B cell (primary cell): ENCODE measurements at regions of chrX and their contacts with region 1.

Region 1: DNA sequence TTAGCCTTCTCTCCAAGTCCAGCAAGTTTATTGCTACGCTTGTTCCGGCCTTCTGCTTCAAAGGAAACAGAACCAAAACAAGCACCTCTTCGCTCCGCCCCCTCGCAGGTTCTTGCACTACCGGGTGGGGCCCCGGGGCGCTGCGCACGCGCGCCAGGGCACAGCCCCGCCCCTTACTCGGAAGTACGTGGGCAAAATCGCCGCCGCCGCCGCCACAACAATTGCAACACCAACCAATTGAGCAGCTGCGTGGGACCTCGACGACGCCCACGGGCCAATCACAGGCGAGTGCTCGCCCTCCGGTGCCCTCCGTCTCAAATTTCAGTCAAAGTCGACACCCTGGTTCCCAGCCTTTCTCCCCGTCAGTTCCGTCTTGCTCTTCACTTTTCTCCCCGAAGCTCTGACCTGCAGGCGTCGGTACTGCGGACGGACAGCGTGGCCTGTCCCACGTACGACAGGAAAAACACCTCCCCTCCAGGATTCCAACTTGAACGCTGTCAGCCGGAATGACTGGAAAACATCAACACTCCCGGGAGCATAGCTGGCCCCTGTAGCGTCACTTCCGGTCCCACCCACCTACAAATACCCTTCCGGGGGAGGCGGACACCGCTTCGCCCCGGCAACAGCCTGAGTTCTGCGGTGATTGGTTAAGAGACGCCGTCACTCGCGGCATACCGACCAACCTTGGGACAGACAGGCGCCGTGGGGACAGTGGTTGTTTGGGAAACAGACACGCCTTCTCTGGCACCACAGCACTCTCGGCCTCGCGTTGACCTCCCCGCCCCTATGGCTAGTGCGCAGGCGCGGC is 624 bp upstream of the OTUD5 start:
- DNase-seq: peak; percentile 96
- ATAC-seq: peak; percentile 81
- H3K4me3 ChIP-seq: peak overlapping the region; percentile 8 to 75 (median 65)
- H3K4me3 Mint-ChIP-seq: peak overlapping the region; percentile 100
- H3K27ac ChIP-seq: peak overlapping the region; percentile 98 to 99
- H3K27ac Mint-ChIP-seq: peak overlapping the region; percentile 100
- H3K4me1 ChIP-seq: peaks cover 50 to 78% of the 10 kb centered on the region in 2 donors
- H3K4me1 Mint-ChIP-seq: peaks cover 61% of the 10 kb centered on the region
- H3K27me3 ChIP-seq: no peaks in the 10 kb centered on the region
- H3K27me3 Mint-ChIP-seq: no peaks in the 10 kb centered on the region
- CTCF ChIP-seq: no peak

Region 2: DNA sequence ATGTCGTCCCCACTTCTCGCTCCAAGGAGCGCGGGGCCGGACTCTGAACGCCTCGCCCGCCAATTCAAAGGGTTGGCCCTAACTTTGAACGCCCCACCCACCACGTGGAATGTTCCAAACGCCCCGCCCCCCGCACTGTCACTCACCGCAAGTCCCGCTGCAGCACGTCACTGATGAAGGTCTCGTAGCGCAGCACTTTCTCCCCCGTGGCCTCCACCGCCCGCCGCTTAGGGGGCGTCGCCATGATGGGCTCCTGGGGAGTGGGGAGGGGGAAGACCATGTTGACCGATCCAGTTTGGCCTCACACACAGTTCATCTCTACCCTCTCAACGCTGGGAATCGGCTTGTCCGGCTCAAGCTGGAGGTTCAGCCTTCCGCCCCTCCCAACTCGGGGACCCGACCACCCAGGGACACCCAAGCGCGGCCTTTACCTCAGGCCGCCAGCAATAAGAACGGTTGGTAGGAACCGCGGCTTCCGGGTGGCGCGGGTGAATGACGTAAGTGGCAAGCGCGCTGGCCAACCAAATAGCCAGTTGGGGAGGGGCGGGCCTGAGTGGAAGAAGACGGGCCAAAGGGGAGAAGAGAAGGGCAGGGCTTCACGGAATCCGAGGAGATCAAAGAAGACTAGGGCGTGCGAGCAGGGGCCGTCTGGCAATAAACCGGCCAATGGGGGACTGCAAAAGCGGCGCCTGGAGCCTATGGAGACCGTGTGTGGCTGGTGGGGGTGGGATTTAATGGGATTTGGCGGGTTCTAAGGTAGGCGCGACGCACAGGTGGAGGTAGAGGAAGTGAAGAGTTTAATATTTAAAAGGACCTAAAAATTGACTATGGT is 1299.1 kb before region 1 on chrX and contains the start of gene UXT:
- CTCF ChIA-PET with region 1: no interaction called
- POLR2A ChIA-PET with region 1: no interaction called
- intact Hi-C with region 1: loop called (anchors 5 kb)
- DNase-seq: peak; percentile 94
- ATAC-seq: peak; percentile 82
- H3K4me3 ChIP-seq: peak within 1 kb of the TSS; percentile 53 to 80 (median 71)
- H3K4me3 Mint-ChIP-seq: peak within 1 kb of the TSS; percentile 95
- H3K27ac ChIP-seq: peak within 1 kb of the TSS; percentile 98
- H3K27ac Mint-ChIP-seq: peak within 1 kb of the TSS; percentile 100
- H3K4me1 ChIP-seq: peaks cover 10 to 16% of the 10 kb centered on the region in 2 donors
- H3K4me1 Mint-ChIP-seq: peaks cover 16% of the 10 kb centered on the region
- H3K27me3 ChIP-seq: no peaks in the 10 kb centered on the region
- H3K27me3 Mint-ChIP-seq: no peaks in the 10 kb centered on the region
- CTCF ChIP-seq: no peak
- total RNA-seq, gene UXT: 177 and 183 TPM in 2 replicates

Region 3: DNA sequence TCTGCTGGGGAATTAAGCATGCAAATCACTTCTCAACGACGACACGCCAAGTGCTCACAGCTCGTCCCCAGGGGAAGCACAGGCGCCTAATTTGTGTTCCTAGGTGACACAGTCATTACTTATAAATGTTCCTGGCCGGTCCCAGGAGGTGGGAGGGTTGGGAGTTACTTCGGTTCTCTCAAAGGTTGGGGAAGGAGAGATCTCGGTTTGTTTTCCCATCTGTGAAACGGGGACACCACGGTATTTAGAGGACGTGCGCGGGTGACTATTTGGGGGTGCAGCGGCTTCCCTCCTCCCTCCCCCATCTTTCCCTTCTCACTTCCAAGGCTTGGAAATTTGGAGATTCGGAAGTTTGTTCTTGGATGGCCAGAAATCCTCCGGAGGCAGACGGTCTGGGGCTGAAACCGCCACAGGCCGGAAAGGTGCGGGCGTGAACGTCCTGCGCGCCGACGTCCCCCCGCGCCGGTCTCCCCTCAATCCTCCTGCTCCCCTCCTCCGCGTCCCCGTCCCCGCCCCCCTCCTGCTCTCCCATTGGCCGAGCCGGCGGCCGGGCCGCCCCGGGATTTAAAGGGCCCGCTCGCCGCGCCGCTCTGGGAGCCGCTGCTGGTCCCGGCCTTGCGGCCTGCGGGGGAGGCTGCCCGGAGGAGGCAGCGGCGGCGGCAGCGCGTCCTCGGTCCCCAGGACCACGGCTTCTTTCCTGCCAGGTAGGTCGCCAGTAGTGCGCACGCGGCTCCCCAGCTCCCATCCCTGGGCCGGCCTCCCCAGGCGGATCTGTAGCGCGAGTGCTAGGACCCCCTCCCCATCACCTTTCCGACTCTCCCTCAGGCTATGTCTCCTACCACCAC is 449.4 kb before region 1 on chrX and contains the start of gene PORCN:
- CTCF ChIA-PET with region 1: no interaction called
- POLR2A ChIA-PET with region 1: no interaction called
- intact Hi-C with region 1: no loop called
- DNase-seq: peak; percentile 82
- ATAC-seq: peak; percentile 92
- H3K4me3 ChIP-seq: peak within 1 kb of the TSS; percentile 58 to 82 (median 74)
- H3K4me3 Mint-ChIP-seq: peak within 1 kb of the TSS; percentile 92
- H3K27ac ChIP-seq: peak within 1 kb of the TSS; percentile 89 to 92
- H3K27ac Mint-ChIP-seq: peak within 1 kb of the TSS; percentile 96
- H3K4me1 ChIP-seq: peaks cover 3 to 13% of the 10 kb centered on the region in 2 donors
- H3K4me1 Mint-ChIP-seq: peaks cover 12% of the 10 kb centered on the region
- H3K27me3 ChIP-seq: no peaks in the 10 kb centered on the region
- H3K27me3 Mint-ChIP-seq: no peaks in the 10 kb centered on the region
- CTCF ChIP-seq: no peak
- total RNA-seq, gene PORCN: 12.8 and 13.0 TPM in 2 replicates

Region 4: DNA sequence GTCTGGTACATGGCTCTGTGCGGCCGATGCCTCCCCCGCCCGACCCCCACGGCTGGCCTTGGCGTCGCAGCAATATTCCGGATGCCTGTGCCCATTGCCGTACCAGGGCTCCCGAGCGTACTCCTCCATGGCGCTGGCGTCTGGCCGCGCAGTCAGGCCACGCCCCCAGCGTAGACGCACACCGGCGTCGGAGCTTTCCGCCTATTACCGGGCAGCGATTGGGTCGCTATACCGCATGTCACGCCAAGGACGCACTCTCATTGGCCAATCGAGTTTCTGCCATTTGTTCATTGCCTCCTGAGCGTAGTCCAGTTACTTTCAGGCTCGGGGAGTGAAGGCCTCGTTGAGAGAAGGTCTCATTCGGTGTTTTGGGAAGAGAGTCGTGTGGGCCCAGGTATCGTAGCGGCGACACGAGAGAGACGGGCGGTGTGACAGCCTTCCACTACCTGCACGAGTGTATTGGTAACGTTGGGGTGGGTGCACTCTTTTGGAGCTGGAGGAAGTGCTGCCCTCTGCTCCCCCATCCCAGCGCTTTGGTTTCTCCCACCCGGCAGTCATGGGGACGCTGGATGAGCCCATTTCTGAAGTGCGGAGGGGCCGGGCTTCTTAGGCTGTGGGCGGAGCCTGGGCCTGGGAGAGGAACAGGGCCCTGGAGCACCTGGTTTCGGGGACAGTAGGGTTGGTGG is 60.3 kb before region 1 on chrX and contains the starts of genes PQBP1 and TIMM17B:
- CTCF ChIA-PET with region 1: no interaction called
- POLR2A ChIA-PET with region 1: interaction called, 8 read pairs
- intact Hi-C with region 1: loop called (anchors 1 kb)
- DNase-seq: peak; percentile 95
- ATAC-seq: peak; percentile 88
- H3K4me3 ChIP-seq: peak within 1 kb of the TSS; percentile 81 to 91 (median 86)
- H3K4me3 Mint-ChIP-seq: peak within 1 kb of the TSS; percentile 89
- H3K27ac ChIP-seq: peak within 1 kb of the TSS; percentile 93 to 94
- H3K27ac Mint-ChIP-seq: peak within 1 kb of the TSS; percentile 94
- H3K4me1 ChIP-seq: peaks cover 12 to 20% of the 10 kb centered on the region in 2 donors
- H3K4me1 Mint-ChIP-seq: peaks cover 22% of the 10 kb centered on the region
- H3K27me3 ChIP-seq: no peaks in the 10 kb centered on the region
- H3K27me3 Mint-ChIP-seq: no peaks in the 10 kb centered on the region
- CTCF ChIP-seq: no peak
- total RNA-seq, gene PQBP1: 89.5 and 89.9 TPM in 2 replicates
- total RNA-seq, gene TIMM17B: 50.0 and 54.3 TPM in 2 replicates

Region 5: GRCh38 chrX:48937054-48937907 is 20.8 kb before region 1 on chrX:
- CTCF ChIA-PET with region 1: interaction called, 4 read pairs
- POLR2A ChIA-PET with region 1: interaction called, 17 read pairs
- intact Hi-C with region 1: loop called (anchors 1 kb)
- DNase-seq: peak; percentile 90
- ATAC-seq: peak; percentile 58
- H3K4me3 ChIP-seq: peak overlapping the region in 4 of 5 experiments; percentile 33 to 57 (median 36)
- H3K4me3 Mint-ChIP-seq: peak overlapping the region; percentile 84
- H3K27ac ChIP-seq: peak overlapping the region; percentile 99
- H3K27ac Mint-ChIP-seq: peak overlapping the region; percentile 99
- H3K4me1 ChIP-seq: peaks cover 91 to 97% of the 10 kb centered on the region in 2 donors
- H3K4me1 Mint-ChIP-seq: peaks cover 82% of the 10 kb centered on the region
- H3K27me3 ChIP-seq: no peaks in the 10 kb centered on the region
- H3K27me3 Mint-ChIP-seq: no peaks in the 10 kb centered on the region
- CTCF ChIP-seq: peak; percentile 67

Region 6: DNA sequence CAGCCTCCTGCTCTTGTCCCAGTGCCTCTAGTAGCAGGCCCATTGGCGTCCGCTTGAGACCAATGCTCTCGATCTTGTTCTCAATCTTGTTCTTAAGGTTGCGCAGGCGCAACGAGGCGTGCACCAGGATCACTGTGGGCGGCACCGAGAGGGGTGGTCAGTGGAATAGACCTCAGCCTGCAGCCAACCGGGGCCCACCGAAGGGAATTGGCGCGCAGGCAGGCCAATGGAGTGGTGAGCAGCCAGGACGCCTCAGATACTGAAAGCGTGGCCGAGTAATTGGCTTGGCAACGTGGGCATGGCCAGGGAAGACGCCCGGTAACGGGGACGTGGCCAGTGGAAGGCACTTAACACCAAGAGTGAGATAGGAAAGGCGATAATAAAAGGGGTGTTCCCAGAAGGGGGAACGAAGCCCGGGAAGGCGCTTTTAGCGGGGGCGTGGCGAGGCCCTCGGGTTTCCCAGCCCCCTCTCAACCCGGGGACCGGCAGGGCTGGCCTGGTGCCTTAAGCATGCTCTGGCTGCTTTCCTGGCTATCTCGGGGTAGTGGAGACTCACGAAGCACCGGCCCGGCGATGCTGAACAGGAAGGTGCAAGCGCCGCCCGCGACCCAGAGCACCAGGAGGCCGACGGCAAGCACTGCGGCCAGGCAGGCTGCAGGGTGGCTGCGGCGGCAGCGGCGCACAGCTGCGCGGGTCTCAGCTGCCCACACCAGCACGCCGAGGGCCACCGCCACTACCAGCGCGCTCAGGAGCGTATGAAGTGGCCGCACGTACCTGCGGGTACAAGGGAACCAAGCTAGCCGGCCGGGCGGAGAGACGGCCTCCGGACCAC is 114.1 kb after region 1 on chrX:
- CTCF ChIA-PET with region 1: no interaction called
- POLR2A ChIA-PET with region 1: no interaction called
- intact Hi-C with region 1: no loop called
- DNase-seq: no peak
- ATAC-seq: no peak
- H3K4me3 ChIP-seq: no peak overlapping the region
- H3K4me3 Mint-ChIP-seq: no peak overlapping the region
- H3K27ac ChIP-seq: no peak overlapping the region
- H3K27ac Mint-ChIP-seq: no peak overlapping the region
- H3K4me1 ChIP-seq: peaks cover 0 to 18% of the 10 kb centered on the region in 2 donors
- H3K4me1 Mint-ChIP-seq: peaks cover 17% of the 10 kb centered on the region
- H3K27me3 ChIP-seq: no peaks in the 10 kb centered on the region
- H3K27me3 Mint-ChIP-seq: no peaks in the 10 kb centered on the region
- CTCF ChIP-seq: no peak

Region 7: DNA sequence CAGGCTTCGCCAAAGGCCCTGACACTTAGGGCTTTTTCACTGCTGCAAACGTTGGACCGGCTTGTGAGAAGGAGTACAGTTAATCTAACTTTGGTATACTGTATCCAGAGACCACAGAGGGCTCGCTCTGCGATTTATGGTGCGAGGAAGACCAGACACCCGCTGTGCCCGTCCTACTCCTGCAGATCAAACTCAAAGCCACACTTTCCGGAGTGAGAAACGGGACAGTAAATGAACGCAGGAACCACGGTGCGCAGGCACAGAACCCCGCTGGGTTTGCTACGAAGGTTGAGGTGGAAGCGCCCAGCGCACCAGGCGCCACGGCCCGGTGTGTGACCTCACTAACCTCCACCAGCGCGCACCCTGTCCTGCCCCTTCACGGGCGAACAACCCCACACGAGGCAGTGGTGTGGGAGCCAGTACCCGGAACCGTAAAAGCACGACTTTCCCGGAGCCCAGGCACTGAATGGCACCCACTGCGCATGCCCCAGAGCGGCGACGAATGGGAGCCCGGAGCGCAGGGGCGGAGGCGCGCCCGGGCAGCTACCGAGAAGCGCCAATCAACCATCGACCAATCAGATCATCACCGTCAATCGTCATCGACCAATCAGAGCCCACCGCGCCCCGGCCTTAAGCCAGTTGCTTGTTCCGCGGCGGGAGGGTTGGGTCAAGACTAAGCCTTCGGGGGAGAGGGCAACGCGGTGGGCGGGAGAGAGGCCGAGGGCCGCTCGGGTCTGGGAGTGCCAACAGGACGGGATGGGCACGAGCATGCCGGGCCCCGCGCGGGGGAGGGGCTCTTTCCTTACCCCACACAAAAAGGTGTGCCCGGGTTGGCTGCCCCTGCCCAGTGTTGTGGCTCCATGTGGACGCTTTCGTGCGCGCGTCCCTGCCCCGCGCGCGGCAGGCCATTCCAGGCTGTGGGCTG is 142.9 kb after region 1 on chrX:
- CTCF ChIA-PET with region 1: no interaction called
- POLR2A ChIA-PET with region 1: no interaction called
- intact Hi-C with region 1: loop called (anchors 1 kb)
- DNase-seq: peak; percentile 93
- ATAC-seq: peak; percentile 91
- H3K4me3 ChIP-seq: peak overlapping the region; percentile 50 to 66 (median 60)
- H3K4me3 Mint-ChIP-seq: peak overlapping the region; percentile 94
- H3K27ac ChIP-seq: peak overlapping the region; percentile 77 to 80
- H3K27ac Mint-ChIP-seq: peak overlapping the region; percentile 95
- H3K4me1 ChIP-seq: peaks cover 3 to 13% of the 10 kb centered on the region in 2 donors
- H3K4me1 Mint-ChIP-seq: peaks cover 9% of the 10 kb centered on the region
- H3K27me3 ChIP-seq: no peaks in the 10 kb centered on the region
- H3K27me3 Mint-ChIP-seq: no peaks in the 10 kb centered on the region
- CTCF ChIP-seq: no peak

Region 8: GRCh38 chrX:49111791-49112190 is 153.8 kb after region 1 on chrX:
- CTCF ChIA-PET with region 1: no interaction called
- POLR2A ChIA-PET with region 1: no interaction called
- intact Hi-C with region 1: no loop called
- DNase-seq: no peak
- ATAC-seq: no peak
- H3K4me3 ChIP-seq: no peak overlapping the region
- H3K4me3 Mint-ChIP-seq: no peak overlapping the region
- H3K27ac ChIP-seq: no peak overlapping the region
- H3K27ac Mint-ChIP-seq: no peak overlapping the region
- H3K4me1 ChIP-seq: no peaks in the 10 kb centered on the region
- H3K4me1 Mint-ChIP-seq: peaks cover 3% of the 10 kb centered on the region
- H3K27me3 ChIP-seq: no peaks in the 10 kb centered on the region
- H3K27me3 Mint-ChIP-seq: no peaks in the 10 kb centered on the region
- CTCF ChIP-seq: no peak

Region 9: GRCh38 chrX:49269010-49269767 is 311.2 kb after region 1 on chrX:
- CTCF ChIA-PET with region 1: no interaction called
- POLR2A ChIA-PET with region 1: interaction called, 3 read pairs
- intact Hi-C with region 1: loop called (anchors 2 kb)
- DNase-seq: peak; percentile 96
- ATAC-seq: peak; percentile 85
- H3K4me3 ChIP-seq: peak overlapping the region; percentile 62 to 77 (median 71)
- H3K4me3 Mint-ChIP-seq: peak overlapping the region; percentile 95
- H3K27ac ChIP-seq: peak overlapping the region; percentile 91 to 98
- H3K27ac Mint-ChIP-seq: peak overlapping the region; percentile 98
- H3K4me1 ChIP-seq: peaks cover 23 to 35% of the 10 kb centered on the region in 2 donors
- H3K4me1 Mint-ChIP-seq: peaks cover 35% of the 10 kb centered on the region
- H3K27me3 ChIP-seq: no peaks in the 10 kb centered on the region
- H3K27me3 Mint-ChIP-seq: no peaks in the 10 kb centered on the region
- CTCF ChIP-seq: no peak